ENCODE measurements at regions of chr13 and their contacts with region 1.

Region 1: GRCh38 chr13:21638319-21639282 is 32.3 kb upstream of the FGF9 start:
- DNase-seq: no peak
- H3K4me3 ChIP-seq: no peak overlapping the region
- H3K27ac ChIP-seq: no peak overlapping the region
- H3K4me1 ChIP-seq: peaks cover 0 to 12% (median 0%) of the 10 kb centered on the region in 6 donors
- H3K27me3 ChIP-seq: peaks cover 0 to 19% (median 0%) of the 10 kb centered on the region in 7 donors
- CTCF ChIP-seq: peak; percentile 48 to 83 (median 73)
- POLR2A ChIP-seq: no peak

Region 2: DNA sequence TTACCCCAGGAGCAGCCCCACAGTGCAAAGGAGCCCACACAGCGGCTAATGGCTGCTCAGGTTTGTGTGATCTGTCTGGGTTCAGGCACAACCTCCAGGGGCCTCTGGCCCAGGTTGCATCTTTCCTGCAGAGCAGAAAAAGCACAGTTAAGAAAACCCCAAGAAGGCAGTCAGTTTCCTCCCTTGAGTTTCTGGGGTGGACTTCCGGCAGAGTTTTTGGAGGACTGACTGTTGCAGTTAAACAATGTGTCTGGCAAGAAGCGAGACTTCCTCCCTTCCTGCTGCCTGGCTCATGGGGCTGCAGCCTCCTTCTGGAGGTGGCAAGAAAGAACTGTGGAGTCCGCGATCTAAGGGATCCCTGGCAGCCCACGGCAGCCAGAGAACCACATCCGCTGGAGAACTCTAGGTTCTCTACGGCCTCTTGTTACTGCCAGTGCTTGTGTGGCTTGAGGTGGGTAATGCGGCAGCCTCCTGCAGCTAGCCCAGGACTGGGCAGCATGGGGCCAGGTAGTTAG is 293.9 kb before region 1 on chr13:
- intact Hi-C with region 1: no loop called
- DNase-seq: no peak
- H3K4me3 ChIP-seq: peak overlapping the region in 1 of 8 donors; percentile 47
- H3K27ac ChIP-seq: peak overlapping the region in 7 of 8 donors; percentile 3 to 67 (median 61)
- H3K4me1 ChIP-seq: peaks cover 0 to 29% (median 10%) of the 10 kb centered on the region in 6 donors
- H3K27me3 ChIP-seq: no peaks in the 10 kb centered on the region
- CTCF ChIP-seq: no peak
- POLR2A ChIP-seq: no peak

Region 3: DNA sequence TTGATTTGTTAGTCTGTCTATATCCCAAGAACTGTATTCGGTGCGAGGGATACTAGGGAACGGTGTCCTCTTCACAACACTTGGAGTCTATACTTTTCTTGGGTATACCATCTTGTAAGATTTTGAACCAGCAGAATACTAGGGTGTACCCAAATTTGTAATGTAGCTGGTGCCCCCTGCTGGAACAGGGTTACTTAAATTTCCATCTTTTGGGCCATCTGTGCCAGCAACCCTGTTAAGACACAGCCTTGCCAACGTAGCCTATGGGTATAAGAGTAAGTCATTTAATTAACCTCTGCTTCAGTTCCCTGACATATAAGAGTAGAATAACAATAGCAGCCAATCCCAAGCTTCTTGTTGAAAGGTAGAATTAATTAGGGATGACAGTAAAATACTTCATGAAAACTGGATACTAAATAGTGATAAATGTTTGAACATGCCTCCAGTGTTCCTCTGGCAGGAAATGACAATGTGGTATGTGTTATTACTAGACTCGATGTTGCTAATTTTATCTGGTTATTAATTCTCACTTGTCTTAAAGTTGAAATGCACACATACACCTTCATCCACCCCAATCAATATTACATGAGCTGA is 639.8 kb after region 1 on chr13:
- intact Hi-C with region 1: loop called (anchors 5 kb)
- DNase-seq: no peak
- H3K4me3 ChIP-seq: no peak overlapping the region
- H3K27ac ChIP-seq: no peak overlapping the region
- H3K4me1 ChIP-seq: no peaks in the 10 kb centered on the region
- H3K27me3 ChIP-seq: no peaks in the 10 kb centered on the region
- CTCF ChIP-seq: peak in 9 of 11 experiments; percentile 8 to 58 (median 47)
- POLR2A ChIP-seq: no peak

Region 4: DNA sequence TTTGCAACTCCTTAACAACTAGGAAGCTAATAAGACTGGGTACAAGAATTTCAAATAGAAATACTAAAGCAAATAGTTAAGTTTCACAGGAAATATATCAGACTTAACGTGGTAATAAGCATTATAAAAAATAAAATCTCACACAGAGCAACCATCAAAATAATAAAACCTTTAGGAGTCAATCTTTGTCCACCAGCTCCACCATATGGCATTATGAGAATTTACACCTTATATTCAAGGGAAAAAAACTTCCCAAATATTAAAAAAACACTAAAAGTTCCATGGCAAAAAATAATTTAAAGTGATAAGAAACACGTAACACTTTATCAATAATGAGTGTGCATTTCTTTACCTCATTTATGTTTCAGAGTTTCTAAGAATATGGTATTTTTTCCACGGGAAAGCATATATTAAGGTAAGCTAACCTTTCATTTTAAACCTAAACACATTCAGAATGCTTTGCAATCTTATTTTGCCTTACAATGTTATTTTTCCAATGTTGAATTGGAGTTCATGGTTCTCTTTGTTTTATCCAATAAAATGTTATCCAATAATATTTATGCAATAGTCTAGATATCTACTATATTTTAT is 1119.0 kb after region 1 on chr13:
- intact Hi-C with region 1: loop called (anchors 10 kb)
- DNase-seq: no peak
- H3K4me3 ChIP-seq: no peak overlapping the region
- H3K27ac ChIP-seq: no peak overlapping the region
- H3K4me1 ChIP-seq: no peaks in the 10 kb centered on the region
- H3K27me3 ChIP-seq: no peaks in the 10 kb centered on the region
- CTCF ChIP-seq: peak in 2 of 11 experiments; percentile 11 to 12
- POLR2A ChIP-seq: no peak

Region 5: DNA sequence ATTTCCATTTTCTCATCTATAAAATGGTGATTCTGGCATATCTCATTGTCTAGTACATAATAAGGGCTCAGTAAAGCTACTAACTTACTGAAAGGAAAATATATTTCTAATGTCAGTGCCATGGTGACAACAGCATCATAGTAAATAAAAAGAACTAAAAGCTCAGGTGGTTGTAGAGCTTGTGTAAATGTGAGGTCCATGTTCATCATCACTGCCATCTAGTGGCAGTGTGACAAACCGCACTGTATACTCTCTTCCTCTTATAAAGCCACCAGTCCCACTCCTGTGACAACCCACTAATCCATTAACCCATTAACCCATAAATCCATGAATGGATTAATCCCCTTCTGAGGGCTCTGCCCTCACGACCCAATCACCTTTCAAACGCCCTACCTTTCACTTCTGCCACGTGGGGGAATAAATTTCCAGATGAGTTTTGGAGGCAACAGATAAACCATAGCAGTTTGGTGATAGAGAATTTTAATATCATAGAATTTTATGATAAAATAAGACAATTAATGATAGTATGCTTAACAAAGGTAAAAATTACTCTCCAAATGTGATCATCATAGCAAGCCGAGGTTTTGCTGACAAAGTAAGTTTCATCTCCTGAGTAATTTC is 1381.7 kb after region 1 on chr13:
- intact Hi-C with region 1: loop called (anchors 10 kb)
- DNase-seq: no peak
- H3K4me3 ChIP-seq: no peak overlapping the region
- H3K27ac ChIP-seq: no peak overlapping the region
- H3K4me1 ChIP-seq: no peaks in the 10 kb centered on the region
- H3K27me3 ChIP-seq: no peaks in the 10 kb centered on the region
- CTCF ChIP-seq: peak in 10 of 11 experiments; percentile 36 to 78 (median 71)
- POLR2A ChIP-seq: no peak